Dorsolateral prefrontal cortex (tissue), 120 donors: ENCODE measurements at regions of chr17 and their contacts with region 1.

Region 1: GRCh38 chr17:79413611-79414010 is 197.2 kb downstream of the RBFOX3 start:
- DNase-seq: peak in 1 of 10 donors; percentile 91
- H3K4me3 ChIP-seq: no peak overlapping the region
- H3K27ac ChIP-seq: peak overlapping the region in 30 of 59 donors; percentile 4 to 93 (median 45)
- H3K27me3 ChIP-seq: peaks cover 0 to 41% (median 10%) of the 10 kb centered on the region in 45 donors
- CTCF ChIP-seq: no peak

Region 2: GRCh38 chr17:78828470-78829185 is 585.0 kb before region 1 on chr17:
- intact Hi-C with region 1: no loop called
- DNase-seq: no peak
- H3K4me3 ChIP-seq: no peak overlapping the region
- H3K27ac ChIP-seq: no peak overlapping the region
- H3K27me3 ChIP-seq: no peaks in the 10 kb centered on the region
- CTCF ChIP-seq: no peak

Region 3: GRCh38 chr17:79294459-79295071 is 119.0 kb before region 1 on chr17:
- intact Hi-C with region 1: no loop called
- DNase-seq: peak in 2 of 10 donors; percentile 33 to 51
- H3K4me3 ChIP-seq: no peak overlapping the region
- H3K27ac ChIP-seq: no peak overlapping the region
- H3K27me3 ChIP-seq: peaks cover 0 to 33% (median 3%) of the 10 kb centered on the region in 45 donors
- CTCF ChIP-seq: no peak

Region 4: DNA sequence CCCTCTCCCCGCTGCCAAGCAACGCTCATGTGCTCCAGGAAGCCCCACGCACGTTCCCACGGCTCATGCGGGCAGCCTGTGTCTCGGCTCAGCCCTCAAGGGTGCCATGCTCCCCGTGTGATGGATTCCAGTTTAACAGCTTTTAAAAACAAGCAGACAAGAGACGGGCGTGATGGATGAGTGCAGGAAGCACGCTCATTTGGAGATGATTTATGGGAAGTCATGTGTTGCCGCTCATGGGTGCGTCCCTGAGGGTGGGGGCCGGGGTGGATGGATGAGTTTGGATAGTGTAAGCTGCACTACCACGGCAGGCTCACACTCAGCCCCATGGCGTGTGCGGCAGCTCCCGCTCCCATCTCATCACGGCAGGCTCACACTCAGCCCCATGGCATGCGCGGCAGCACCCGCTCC is 64.4 kb after region 1 on chr17:
- intact Hi-C with region 1: loop called in 1 of 2 experiments (anchors 10 kb)
- DNase-seq: peak in 3 of 10 donors; percentile 39 to 47 (median 41)
- H3K4me3 ChIP-seq: no peak overlapping the region
- H3K27ac ChIP-seq: peak overlapping the region in 33 of 59 donors; percentile 3 to 97 (median 44)
- H3K27me3 ChIP-seq: peaks cover 0 to 22% (median 0%) of the 10 kb centered on the region in 45 donors
- CTCF ChIP-seq: no peak